Activated CD8-positive, alpha-beta T cell treated with anti-CD3 and anti-CD28 coated beads, Interleukin-2, amount 10 ng/mL, durations not matched to agents 7 days and 5 days (primary cell): ENCODE measurements at regions of chr1 and their contacts with region 1.

Region 1: DNA sequence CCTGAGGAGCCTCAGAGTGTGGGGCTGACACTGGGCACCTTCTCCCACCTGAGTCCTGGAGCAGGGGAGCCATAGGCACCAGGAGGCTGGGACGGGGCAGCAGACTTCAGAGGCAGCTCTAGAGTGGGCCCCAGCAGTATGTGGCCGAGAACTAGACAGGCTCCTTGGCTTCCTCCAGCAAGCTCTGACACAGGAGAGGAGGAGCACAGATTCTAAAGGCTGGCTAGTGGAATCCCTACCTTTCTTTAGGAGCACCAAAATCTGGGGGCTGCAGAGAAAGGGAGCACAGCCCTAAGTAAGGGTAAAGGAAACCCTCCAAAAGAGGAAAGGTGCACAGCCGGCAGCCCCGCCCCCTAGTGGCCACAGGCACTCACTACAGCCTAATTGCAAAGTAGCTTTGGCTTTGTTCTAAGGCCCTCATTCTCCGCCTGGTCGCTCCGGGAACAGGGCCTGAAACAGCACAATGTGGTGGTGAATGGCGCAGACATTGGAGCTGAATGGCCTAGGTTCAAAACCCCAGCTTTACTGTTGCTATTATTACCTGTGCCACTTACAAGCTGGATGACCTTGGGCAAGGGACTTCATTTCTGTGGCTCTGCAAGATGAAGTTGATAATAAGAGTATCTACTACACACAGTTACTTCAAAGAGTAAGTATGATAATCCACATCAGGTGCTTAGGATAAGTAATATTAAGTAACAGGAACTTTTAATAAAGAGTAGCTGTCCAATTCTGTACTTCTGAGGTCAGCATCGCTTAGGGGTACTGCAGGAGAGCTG is 8.8 kb upstream of the GUCA2A start:
- DNase-seq: peak; percentile 71
- ATAC-seq: peak; percentile 68
- H3K4me3 Mint-ChIP-seq: no peak overlapping the region
- H3K27ac Mint-ChIP-seq: no peak overlapping the region
- H3K4me1 Mint-ChIP-seq: no peaks in the 10 kb centered on the region
- H3K27me3 Mint-ChIP-seq: no peaks in the 10 kb centered on the region

Region 2: DNA sequence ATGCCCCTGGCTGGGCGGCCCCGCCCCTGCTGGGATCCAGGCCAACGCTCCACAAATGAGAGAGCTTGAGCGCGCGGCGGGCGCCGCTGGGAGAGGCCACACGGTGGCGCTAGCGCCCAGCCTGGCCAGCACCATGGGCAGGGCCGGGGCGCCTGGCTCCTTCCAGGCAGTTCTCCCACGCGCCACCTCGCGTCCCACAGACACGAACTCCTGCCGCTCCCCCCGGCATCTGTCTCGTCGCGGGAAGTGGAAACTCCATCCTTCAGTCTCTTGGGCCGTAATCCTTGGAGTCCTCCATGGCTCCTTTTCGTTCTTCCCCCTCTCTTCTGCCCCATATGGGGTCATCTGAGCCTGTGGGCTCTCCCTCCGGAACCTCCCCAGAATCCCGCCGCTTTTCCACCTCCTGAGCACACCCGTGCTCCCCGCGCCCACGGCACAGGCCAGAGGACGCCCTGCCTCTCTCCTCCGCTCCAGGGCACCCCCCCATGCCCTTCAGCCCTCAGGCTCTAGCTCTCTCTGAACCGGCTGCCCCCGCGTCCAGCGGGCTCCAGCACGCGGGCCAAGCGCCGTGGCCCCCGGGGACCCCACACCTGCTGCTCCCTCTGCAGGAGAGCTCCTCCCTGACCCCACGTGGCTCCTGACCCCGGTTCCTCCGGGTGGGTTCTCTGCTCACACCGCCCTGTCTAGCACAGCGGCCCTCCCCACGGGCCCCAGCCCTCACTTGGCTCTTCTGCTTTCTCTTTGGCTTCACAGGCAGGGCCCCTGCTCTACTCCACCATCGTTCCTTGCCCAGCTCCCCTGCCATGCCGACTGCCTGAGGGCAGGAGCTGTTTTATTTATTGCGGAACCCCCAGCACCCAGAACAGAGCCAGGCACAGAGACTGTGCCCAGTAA is 656.9 kb before region 1 on chr1:
- CTCF ChIA-PET with region 1: interaction called, 17 read pairs
- POLR2A ChIA-PET with region 1: no interaction called
- DNase-seq: peak; percentile 67
- ATAC-seq: peak; percentile 91
- H3K4me3 Mint-ChIP-seq: no peak overlapping the region
- H3K27ac Mint-ChIP-seq: no peak overlapping the region
- H3K4me1 Mint-ChIP-seq: no peaks in the 10 kb centered on the region
- H3K27me3 Mint-ChIP-seq: no peaks in the 10 kb centered on the region

Region 3: GRCh38 chr1:41573785-41574713 is 599.3 kb before region 1 on chr1:
- CTCF ChIA-PET with region 1: interaction called, 27 read pairs
- POLR2A ChIA-PET with region 1: no interaction called
- DNase-seq: peak; percentile 93
- ATAC-seq: peak; percentile 99
- H3K4me3 Mint-ChIP-seq: no peak overlapping the region
- H3K27ac Mint-ChIP-seq: no peak overlapping the region
- H3K4me1 Mint-ChIP-seq: peaks cover 26% of the 10 kb centered on the region
- H3K27me3 Mint-ChIP-seq: no peaks in the 10 kb centered on the region

Region 4: GRCh38 chr1:42146626-42147320 is 26.6 kb before region 1 on chr1:
- CTCF ChIA-PET with region 1: interaction called, 16 read pairs
- POLR2A ChIA-PET with region 1: interaction called, 3 read pairs
- DNase-seq: peak; percentile 78
- ATAC-seq: peak; percentile 86
- H3K4me3 Mint-ChIP-seq: no peak overlapping the region
- H3K27ac Mint-ChIP-seq: no peak overlapping the region
- H3K4me1 Mint-ChIP-seq: peaks cover 6% of the 10 kb centered on the region
- H3K27me3 Mint-ChIP-seq: peaks cover 3% of the 10 kb centered on the region

Region 5: GRCh38 chr1:42157667-42158066 is 15.7 kb before region 1 on chr1:
- CTCF ChIA-PET with region 1: interaction called, 32 read pairs
- POLR2A ChIA-PET with region 1: no interaction called
- DNase-seq: peak; percentile 25
- ATAC-seq: peak; percentile 42
- H3K4me3 Mint-ChIP-seq: no peak overlapping the region
- H3K27ac Mint-ChIP-seq: peak overlapping the region; percentile 22
- H3K4me1 Mint-ChIP-seq: peaks cover 14% of the 10 kb centered on the region
- H3K27me3 Mint-ChIP-seq: peaks cover 8% of the 10 kb centered on the region

Region 6: DNA sequence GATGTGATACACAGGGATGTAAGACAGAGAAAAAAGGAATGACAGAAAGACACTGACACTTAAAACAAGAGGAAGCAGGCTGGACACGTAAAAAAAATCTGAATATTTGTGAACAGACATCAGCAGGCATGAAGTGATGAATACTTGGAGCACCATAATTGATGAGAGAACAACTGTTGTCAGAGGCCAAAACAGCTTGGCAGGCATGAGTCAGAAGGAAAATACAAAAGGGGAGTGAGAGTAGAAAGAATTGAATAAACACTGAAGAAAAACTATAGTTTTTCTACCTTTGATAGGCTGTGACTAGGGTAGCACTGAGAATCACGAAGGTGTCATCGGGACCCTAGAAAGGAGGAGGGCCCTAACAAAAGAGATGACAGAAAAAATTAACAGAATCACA is 12.8 kb after region 1 on chr1:
- CTCF ChIA-PET with region 1: interaction called, 13 read pairs
- POLR2A ChIA-PET with region 1: no interaction called
- DNase-seq: no peak
- ATAC-seq: no peak
- H3K4me3 Mint-ChIP-seq: no peak overlapping the region
- H3K27ac Mint-ChIP-seq: no peak overlapping the region
- H3K4me1 Mint-ChIP-seq: peaks cover 2% of the 10 kb centered on the region
- H3K27me3 Mint-ChIP-seq: no peaks in the 10 kb centered on the region

Region 7: GRCh38 chr1:42240966-42241755 is 67.8 kb after region 1 on chr1:
- CTCF ChIA-PET with region 1: no interaction called
- POLR2A ChIA-PET with region 1: no interaction called
- DNase-seq: no peak
- ATAC-seq: no peak
- H3K4me3 Mint-ChIP-seq: no peak overlapping the region
- H3K27ac Mint-ChIP-seq: no peak overlapping the region
- H3K4me1 Mint-ChIP-seq: peaks cover 8% of the 10 kb centered on the region
- H3K27me3 Mint-ChIP-seq: no peaks in the 10 kb centered on the region

Region 8: GRCh38 chr1:42340093-42340684 is 166.8 kb after region 1 on chr1:
- CTCF ChIA-PET with region 1: interaction called, 15 read pairs
- POLR2A ChIA-PET with region 1: no interaction called
- DNase-seq: no peak
- ATAC-seq: no peak
- H3K4me3 Mint-ChIP-seq: no peak overlapping the region
- H3K27ac Mint-ChIP-seq: no peak overlapping the region
- H3K4me1 Mint-ChIP-seq: peaks cover 11% of the 10 kb centered on the region
- H3K27me3 Mint-ChIP-seq: peaks cover 4% of the 10 kb centered on the region